A673 (cell line): ENCODE measurements at regions of chr4 and their contacts with region 1.

Region 1: DNA sequence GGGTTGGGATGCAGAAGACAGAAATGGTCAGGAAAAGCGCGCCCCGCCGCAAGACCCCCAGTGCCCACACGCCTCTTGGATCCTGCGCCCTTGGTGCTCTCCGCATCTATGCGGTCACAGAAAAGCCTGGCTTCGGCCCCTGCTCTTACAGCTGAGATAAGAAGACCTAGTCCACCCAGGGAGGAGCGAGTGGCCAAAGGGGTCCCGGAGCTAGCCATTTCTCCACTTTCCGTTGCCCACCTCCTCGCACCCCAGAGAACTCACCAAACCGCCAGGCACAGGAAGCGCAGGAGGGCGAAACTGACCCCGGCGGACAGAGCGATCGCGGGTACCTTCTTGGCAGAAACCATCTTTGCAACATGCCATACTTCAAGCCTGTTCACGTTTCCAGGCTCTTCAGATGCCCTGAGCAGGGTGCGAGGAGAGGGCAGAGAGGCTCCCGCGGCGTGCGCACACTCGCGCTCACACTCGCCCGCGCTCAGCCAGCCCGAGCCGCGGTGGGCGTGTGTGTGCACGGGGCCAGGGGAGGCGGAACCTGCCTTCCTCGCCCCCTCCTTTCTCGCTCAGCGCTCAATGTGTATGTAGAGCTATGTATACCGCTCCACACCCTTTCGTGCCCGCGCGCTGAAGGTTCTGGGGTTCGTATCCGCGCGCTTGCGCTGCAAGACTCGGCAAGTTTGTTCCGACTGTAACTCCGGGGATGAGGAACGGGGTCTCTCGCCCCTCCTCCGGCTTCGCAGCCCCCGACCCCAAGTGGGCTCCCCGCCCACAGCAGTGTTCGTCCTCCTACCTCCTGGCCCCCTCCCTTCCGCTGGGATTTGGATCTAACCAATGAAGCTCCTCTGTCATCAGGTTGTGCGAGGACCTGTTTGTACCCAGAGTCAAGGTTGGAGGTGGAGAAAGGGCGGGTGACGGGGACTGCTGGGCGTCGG is at the start of gene GABRA4:
- DNase-seq: peak; percentile 22
- H3K4me3 ChIP-seq: peak within 1 kb of the TSS; percentile 48
- H3K27ac ChIP-seq: no peak within 1 kb of the TSS
- H3K4me1 ChIP-seq: no peaks in the 10 kb centered on the region
- H3K27me3 ChIP-seq: peaks cover 58% of the 10 kb centered on the region
- CTCF ChIP-seq: no peak
- total RNA-seq, gene GABRA4: 0.58 and 2.5 TPM in 2 replicates

Region 2: DNA sequence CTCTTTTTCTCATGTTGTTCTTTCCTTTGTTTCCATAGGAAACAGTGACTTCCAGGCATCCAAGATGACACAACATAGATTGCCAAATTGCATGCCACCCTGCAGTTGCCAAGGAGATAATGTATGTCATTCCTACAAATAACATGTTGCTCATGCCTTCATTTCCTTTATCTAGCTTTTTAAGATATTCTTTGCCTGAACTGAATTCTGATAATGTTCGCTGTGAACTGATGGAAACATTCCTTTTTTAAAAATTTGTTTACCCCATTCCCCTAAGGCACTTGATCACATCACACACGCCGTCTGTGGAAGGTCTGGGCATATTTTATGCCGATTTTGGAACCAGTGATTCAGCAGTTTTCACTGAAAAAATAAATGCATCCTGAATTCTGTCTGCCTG is 46.3 kb before region 1 on chr4:
- CTCF ChIA-PET with region 1: interaction called, 13 read pairs
- POLR2A ChIA-PET with region 1: no interaction called
- intact Hi-C with region 1: no loop called
- DNase-seq: no peak
- H3K4me3 ChIP-seq: peak overlapping the region; percentile 9
- H3K27ac ChIP-seq: peak overlapping the region; percentile 80
- H3K4me1 ChIP-seq: peaks cover 53% of the 10 kb centered on the region
- H3K27me3 ChIP-seq: no peaks in the 10 kb centered on the region
- CTCF ChIP-seq: no peak